HepG2 (cell line): ENCODE measurements at regions of chr9 and their contacts with region 1.

Region 1: DNA sequence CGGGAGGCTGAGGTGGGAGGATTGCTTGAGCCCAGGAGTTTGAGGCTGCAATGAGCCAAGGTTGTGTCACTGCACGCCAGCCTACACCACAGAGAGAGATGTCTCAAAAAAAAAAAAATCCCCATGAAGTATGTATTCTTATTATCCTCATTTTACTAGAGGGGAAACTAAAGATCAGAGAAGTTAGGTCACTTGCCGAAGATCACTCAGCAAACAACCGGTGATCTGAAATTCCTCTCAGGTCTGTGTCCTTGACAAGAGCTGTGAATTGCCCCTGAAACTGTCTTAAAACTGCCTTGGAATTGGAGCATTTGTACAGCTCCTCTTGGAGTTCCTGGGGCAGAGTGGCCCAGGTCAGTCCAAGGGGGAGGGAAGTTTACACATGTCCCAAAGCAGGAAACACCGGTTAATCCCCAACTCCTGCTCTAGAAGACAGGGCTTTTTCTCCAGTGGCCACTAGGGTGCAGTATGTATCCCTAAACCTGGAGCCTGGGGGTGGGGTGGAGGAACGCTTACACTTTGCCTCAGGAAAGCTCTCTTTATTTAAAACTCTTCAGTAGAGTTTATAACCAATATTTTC is 27.6 kb downstream of the AQP7 start:
- DNase-seq: peak; percentile 70
- ATAC-seq: peak; percentile 72
- H3K4me3 ChIP-seq: no peak overlapping the region
- H3K27ac ChIP-seq: no peak overlapping the region
- H3K4me1 ChIP-seq: peaks cover 31% of the 10 kb centered on the region
- H3K27me3 ChIP-seq: no peaks in the 10 kb centered on the region
- CTCF ChIP-seq: peak; percentile 84
- EP300 ChIP-seq: no peak
- POLR2A ChIP-seq: no peak
- RAD21 ChIP-seq: peak; percentile 74

Region 2: GRCh38 chr9:33320568-33321261 is 54.0 kb before region 1 on chr9:
- CTCF ChIA-PET with region 1: no interaction called
- POLR2A ChIA-PET with region 1: no interaction called
- in situ Hi-C with region 1: no loop called
- intact Hi-C with region 1: no loop called
- DNase-seq: no peak
- ATAC-seq: no peak
- H3K4me3 ChIP-seq: no peak overlapping the region
- H3K27ac ChIP-seq: no peak overlapping the region
- H3K4me1 ChIP-seq: no peaks in the 10 kb centered on the region
- H3K27me3 ChIP-seq: no peaks in the 10 kb centered on the region
- CTCF ChIP-seq: no peak
- EP300 ChIP-seq: no peak
- POLR2A ChIP-seq: no peak
- RAD21 ChIP-seq: no peak

Region 3: GRCh38 chr9:33452828-33453271 is 78.1 kb after region 1 on chr9:
- CTCF ChIA-PET with region 1: interaction called, 11 read pairs
- POLR2A ChIA-PET with region 1: no interaction called
- in situ Hi-C with region 1: no loop called
- intact Hi-C with region 1: no loop called
- DNase-seq: peak; percentile 73
- ATAC-seq: peak; percentile 89
- H3K4me3 ChIP-seq: no peak overlapping the region; a peak in 1 of 6 replicates
- H3K27ac ChIP-seq: no peak overlapping the region
- H3K4me1 ChIP-seq: peaks cover 33% of the 10 kb centered on the region
- H3K27me3 ChIP-seq: peaks cover 1 to 19% of the 10 kb centered on the region in 2 experiments; a peak in 4 of 5 replicates
- CTCF ChIP-seq: peak; percentile 93
- EP300 ChIP-seq: no peak
- POLR2A ChIP-seq: no peak
- RAD21 ChIP-seq: peak; percentile 80

Region 4: DNA sequence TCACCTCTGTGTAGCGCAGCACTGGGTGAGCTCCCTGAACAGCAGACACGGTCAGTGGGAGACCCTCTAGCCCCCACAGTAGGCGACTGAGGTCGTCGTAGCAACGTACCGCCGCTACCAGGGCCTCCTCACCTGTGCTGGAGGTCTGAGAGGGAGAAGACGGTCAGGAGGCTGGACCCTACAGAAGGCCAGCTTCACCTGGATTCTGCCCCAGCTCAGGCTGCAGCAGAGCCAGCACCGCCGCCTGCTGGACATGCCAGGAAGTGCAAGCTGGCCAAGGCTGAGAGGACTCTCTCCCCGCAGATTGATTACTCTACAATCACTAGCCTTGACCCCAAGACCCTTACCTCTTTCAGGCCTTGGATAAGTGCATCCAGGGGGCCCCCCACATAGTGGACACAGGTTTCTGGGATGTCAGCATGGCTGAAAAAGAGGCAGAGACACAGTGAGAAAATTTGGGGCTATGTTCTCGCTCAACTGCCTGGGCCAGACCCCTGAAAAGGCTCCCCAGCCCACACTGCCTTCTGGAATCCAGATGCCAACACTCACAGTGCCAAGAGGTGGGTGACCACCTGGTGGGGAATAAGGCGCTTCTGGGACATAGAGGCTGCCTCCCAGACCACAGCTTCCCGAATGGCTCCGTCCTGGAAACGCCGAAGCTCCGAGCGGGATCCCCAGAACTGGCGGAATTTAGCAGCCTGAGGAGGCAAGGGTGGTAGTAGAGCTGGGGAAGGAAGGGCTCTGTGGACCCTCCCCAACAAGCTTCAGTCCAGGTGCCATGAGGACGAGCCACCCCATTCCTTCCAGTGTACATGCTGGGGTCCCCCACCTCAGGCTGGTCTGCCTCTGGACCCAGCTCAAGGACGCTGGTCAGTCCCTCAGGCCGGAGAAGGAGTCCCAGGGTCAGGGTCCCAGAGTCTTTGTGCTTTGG is 92.1 kb after region 1 on chr9:
- CTCF ChIA-PET with region 1: interaction called, 11 read pairs
- POLR2A ChIA-PET with region 1: no interaction called
- in situ Hi-C with region 1: loop called (anchors 10 kb)
- intact Hi-C with region 1: loop called (anchors 1 kb)
- DNase-seq: peak; percentile 19
- ATAC-seq: peak; percentile 88
- H3K4me3 ChIP-seq: no peak overlapping the region
- H3K27ac ChIP-seq: no peak overlapping the region
- H3K4me1 ChIP-seq: peaks cover 13% of the 10 kb centered on the region
- H3K27me3 ChIP-seq: no peaks in the 10 kb centered on the region
- CTCF ChIP-seq: peak; percentile 97
- EP300 ChIP-seq: no peak
- POLR2A ChIP-seq: no peak
- RAD21 ChIP-seq: peak; percentile 94

Region 5: DNA sequence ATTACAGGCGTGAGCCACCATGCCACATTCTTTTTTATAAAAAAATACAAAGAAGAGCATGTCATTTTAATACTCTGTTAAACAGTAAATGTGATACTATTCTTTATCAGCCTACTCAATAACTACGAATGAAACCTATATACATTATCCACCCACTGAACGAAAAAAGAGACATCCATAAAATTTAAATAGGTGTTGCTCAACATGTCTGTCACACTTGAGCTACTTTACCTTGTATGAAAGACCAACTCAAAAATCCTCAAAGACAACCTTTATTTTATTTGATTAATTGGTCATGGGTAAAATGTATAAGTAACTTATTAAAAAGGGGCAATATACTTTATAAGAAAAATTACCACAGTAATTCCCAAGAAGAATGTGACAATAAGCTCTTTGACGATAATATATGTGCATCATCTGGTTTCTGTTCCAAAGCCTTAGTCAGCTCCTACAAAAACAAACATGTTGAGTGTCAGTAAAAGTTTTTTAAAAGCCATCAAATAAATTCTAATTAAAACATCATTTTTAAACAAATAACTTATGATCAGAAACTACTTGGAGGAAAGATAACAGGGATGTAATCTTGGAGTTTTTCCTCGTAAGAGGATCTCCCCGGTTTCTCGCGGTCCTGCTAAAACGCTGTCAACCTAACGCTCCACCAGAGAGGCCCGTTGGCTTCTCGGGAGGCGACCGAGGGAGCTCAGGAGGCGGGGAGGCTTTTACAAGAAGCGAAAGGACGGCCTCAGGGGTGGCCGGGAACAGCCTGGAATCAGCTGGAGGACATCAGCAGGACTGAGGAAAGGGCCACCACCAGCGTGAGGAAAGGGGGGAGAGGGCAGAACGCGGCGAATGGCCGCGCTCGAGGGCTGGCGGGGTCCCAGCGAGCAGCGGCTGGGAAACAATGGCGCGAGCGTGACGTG is 135.8 kb after region 1 on chr9:
- CTCF ChIA-PET with region 1: no interaction called
- POLR2A ChIA-PET with region 1: no interaction called
- in situ Hi-C with region 1: no loop called
- intact Hi-C with region 1: no loop called
- DNase-seq: no peak
- ATAC-seq: peak; percentile 91
- H3K4me3 ChIP-seq: peak overlapping the region; percentile 78 to 83 (median 81)
- H3K27ac ChIP-seq: no peak overlapping the region
- H3K4me1 ChIP-seq: peaks cover 11% of the 10 kb centered on the region
- H3K27me3 ChIP-seq: no peaks in the 10 kb centered on the region; a peak in 1 of 5 replicates
- CTCF ChIP-seq: no peak
- EP300 ChIP-seq: no peak
- POLR2A ChIP-seq: no peak
- RAD21 ChIP-seq: no peak